Activated CD4-positive, alpha-beta memory T cell treated with anti-CD3 and anti-CD28 coated beads for 36 hours (primary cell): ENCODE measurements at regions of chr2 and their contacts with region 1.

Region 1: DNA sequence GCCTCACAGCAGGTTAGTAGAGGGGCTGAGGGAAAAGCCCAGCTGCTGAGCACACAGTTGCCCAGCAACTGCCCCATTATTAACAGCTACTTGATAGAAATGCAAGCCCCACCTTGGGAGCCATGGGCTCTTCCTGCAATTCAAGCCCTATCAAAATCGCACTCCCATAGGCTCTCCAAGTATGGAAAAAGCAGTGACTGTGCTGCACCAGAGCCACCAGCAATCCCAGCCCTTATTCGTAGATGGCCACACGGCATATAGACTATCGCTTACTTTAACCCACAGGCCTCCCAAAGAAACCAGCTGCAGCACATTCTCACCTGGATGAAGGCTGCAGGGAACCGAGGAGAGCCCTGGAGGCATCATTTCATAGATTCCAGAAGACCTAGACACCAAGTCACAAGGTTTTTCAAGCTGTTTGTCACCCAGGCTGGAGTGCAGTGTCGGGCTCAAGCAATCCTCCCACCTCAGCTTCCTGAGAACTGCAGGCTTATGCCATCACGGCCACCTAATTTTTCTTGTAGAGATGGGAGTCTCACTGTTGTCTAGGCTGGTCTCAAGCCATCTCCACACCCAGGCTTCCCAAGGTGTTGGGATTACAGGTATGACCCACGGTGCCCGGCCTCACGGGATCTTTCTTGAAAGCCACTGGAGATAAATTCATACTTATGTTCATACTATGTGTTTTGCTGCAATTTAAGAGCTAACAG is 11.3 kb downstream of the NCL start:
- DNase-seq: no peak
- H3K4me3 Mint-ChIP-seq: no peak overlapping the region
- H3K27ac Mint-ChIP-seq: peak overlapping the region; percentile 14
- H3K4me1 Mint-ChIP-seq: peaks cover 16% of the 10 kb centered on the region
- H3K27me3 Mint-ChIP-seq: no peaks in the 10 kb centered on the region

Region 2: DNA sequence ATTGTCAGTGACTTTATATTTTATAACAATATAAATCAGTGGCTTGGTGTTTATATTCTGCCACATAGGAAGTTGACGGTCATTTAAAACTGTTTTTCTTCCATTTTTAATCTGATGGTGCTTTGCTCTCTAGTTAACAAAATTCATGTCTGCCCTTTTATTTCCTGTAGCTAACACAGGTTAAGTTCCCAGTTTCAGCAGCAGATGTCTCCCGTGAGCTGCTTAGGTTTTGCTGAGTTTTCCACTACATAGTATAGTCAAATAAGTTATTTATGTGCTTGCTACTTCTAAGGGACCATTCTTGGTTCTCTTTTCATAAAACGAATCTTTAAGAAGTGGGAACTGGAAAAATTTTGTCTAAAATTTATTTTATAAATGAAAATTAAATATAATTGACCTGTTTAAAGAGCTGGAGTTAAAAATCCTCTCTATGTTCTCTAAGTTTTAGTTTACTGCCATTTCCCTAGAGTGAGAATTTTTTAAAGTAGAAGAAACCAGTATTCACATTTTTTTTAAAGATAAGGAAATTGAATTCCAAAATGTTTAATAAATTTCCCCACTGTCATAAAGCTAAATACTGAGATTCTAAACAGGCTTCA is 348.7 kb before region 1 on chr2:
- CTCF ChIA-PET with region 1: interaction called, 25 read pairs
- POLR2A ChIA-PET with region 1: no interaction called
- intact Hi-C with region 1: no loop called
- DNase-seq: peak; percentile 71
- H3K4me3 Mint-ChIP-seq: no peak overlapping the region
- H3K27ac Mint-ChIP-seq: peak overlapping the region; percentile 1
- H3K4me1 Mint-ChIP-seq: peaks cover 11% of the 10 kb centered on the region
- H3K27me3 Mint-ChIP-seq: no peaks in the 10 kb centered on the region

Region 3: GRCh38 chr2:231227309-231228162 is 225.4 kb before region 1 on chr2:
- CTCF ChIA-PET with region 1: interaction called, 34 read pairs
- POLR2A ChIA-PET with region 1: no interaction called
- intact Hi-C with region 1: loop called (anchors 1 kb)
- DNase-seq: peak; percentile 51
- H3K4me3 Mint-ChIP-seq: no peak overlapping the region
- H3K27ac Mint-ChIP-seq: no peak overlapping the region
- H3K4me1 Mint-ChIP-seq: no peaks in the 10 kb centered on the region
- H3K27me3 Mint-ChIP-seq: no peaks in the 10 kb centered on the region

Region 4: DNA sequence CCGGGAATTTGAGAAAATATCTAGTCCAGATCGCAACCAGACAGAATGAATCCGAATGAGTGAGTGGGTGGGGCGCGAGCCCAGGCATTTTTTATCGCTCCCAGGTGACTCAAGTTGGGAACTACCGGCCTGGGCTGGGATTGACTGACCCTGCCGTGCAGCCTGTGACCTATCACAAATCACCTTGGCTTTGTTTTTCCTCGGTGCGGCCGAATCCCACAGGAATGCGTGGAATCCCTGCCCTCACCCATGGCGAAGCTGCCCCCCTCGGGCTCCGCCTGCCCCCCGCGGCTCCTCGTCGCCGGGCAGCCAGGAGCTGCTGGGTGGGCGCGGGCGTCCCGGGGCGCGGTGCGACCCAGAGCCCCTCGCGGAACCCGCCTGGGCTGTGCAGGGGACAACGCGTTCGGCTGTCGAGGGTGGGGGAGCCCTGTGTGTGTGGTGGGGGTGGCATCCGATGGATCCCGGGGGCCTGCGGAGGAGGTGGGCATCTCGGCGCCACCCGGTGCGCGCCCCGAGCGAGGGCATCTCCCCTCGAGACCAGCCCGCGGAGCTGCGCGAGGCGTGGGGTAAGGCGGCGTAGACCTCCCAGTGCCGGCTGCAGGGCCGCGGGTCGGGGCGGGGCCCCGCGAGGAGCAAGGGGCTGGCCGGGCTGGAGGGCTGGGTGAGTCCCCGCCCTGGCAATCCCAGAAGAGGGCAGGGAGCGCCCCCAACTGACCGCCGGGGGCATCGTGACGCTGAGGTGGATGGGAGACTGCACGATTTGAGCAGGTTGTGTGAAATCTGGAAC is 40.9 kb before region 1 on chr2:
- CTCF ChIA-PET with region 1: interaction called, 7 read pairs
- POLR2A ChIA-PET with region 1: no interaction called
- intact Hi-C with region 1: loop called (anchors 2 kb)
- DNase-seq: peak; percentile 79
- H3K4me3 Mint-ChIP-seq: peak overlapping the region; percentile 29
- H3K27ac Mint-ChIP-seq: no peak overlapping the region
- H3K4me1 Mint-ChIP-seq: peaks cover 7% of the 10 kb centered on the region
- H3K27me3 Mint-ChIP-seq: peaks cover 36% of the 10 kb centered on the region

Region 5: GRCh38 chr2:231482806-231483391 is 29.9 kb after region 1 on chr2:
- CTCF ChIA-PET with region 1: interaction called, 10 read pairs
- POLR2A ChIA-PET with region 1: interaction called, 3 read pairs
- intact Hi-C with region 1: no loop called
- DNase-seq: peak; percentile 84
- H3K4me3 Mint-ChIP-seq: peak overlapping the region; percentile 80
- H3K27ac Mint-ChIP-seq: peak overlapping the region; percentile 88
- H3K4me1 Mint-ChIP-seq: peaks cover 10% of the 10 kb centered on the region
- H3K27me3 Mint-ChIP-seq: no peaks in the 10 kb centered on the region